Naive thymus-derived CD4-positive, alpha-beta T cell (primary cell): ENCODE measurements at regions of chr15 and their contacts with region 1.

Region 1: DNA sequence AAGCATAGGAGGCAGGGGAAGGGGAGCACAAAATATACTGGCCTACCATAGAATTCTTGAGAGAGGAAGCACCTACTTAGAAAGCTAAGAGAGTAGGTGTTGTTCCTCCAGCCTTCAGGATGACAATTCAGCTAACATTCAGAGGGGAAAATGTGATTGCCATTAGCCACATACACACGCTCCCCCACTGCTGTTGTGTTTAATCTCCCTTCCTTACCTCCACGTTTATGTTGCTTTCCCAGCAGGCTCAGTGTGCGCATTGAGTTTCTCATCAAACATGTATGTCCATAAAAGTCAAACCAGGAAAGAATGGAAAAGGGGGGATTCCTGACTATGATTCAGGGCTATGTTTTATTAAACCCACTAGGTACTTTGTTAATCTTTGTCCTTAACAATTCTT is 145.2 kb upstream of the CHRM5 start:
- DNase-seq: no peak
- ATAC-seq: no peak
- H3K4me3 ChIP-seq: no peak overlapping the region
- H3K4me3 Mint-ChIP-seq: no peak overlapping the region
- H3K27ac ChIP-seq: no peak overlapping the region
- H3K27ac Mint-ChIP-seq: no peak overlapping the region
- H3K4me1 ChIP-seq: no peaks in the 10 kb centered on the region
- H3K4me1 Mint-ChIP-seq: no peaks in the 10 kb centered on the region
- H3K27me3 ChIP-seq: no peaks in the 10 kb centered on the region
- H3K27me3 Mint-ChIP-seq: peaks cover 4 to 20% (median 13%) of the 10 kb centered on the region in 5 donors

Region 2: GRCh38 chr15:33810073-33810595 is 13.0 kb before region 1 on chr15:
- CTCF ChIA-PET with region 1: no interaction called
- POLR2A ChIA-PET with region 1: no interaction called
- intact Hi-C with region 1: loop called in 1 of 2 experiments (anchors 1 kb)
- DNase-seq: no peak
- ATAC-seq: no peak
- H3K4me3 ChIP-seq: no peak overlapping the region
- H3K4me3 Mint-ChIP-seq: no peak overlapping the region
- H3K27ac ChIP-seq: no peak overlapping the region
- H3K27ac Mint-ChIP-seq: no peak overlapping the region
- H3K4me1 ChIP-seq: no peaks in the 10 kb centered on the region
- H3K4me1 Mint-ChIP-seq: no peaks in the 10 kb centered on the region
- H3K27me3 ChIP-seq: no peaks in the 10 kb centered on the region
- H3K27me3 Mint-ChIP-seq: peaks cover 7 to 34% (median 11%) of the 10 kb centered on the region in 5 donors